Motor neuron (in vitro differentiated cells): ENCODE measurements at regions of chr2 and their contacts with region 1.

Region 1: DNA sequence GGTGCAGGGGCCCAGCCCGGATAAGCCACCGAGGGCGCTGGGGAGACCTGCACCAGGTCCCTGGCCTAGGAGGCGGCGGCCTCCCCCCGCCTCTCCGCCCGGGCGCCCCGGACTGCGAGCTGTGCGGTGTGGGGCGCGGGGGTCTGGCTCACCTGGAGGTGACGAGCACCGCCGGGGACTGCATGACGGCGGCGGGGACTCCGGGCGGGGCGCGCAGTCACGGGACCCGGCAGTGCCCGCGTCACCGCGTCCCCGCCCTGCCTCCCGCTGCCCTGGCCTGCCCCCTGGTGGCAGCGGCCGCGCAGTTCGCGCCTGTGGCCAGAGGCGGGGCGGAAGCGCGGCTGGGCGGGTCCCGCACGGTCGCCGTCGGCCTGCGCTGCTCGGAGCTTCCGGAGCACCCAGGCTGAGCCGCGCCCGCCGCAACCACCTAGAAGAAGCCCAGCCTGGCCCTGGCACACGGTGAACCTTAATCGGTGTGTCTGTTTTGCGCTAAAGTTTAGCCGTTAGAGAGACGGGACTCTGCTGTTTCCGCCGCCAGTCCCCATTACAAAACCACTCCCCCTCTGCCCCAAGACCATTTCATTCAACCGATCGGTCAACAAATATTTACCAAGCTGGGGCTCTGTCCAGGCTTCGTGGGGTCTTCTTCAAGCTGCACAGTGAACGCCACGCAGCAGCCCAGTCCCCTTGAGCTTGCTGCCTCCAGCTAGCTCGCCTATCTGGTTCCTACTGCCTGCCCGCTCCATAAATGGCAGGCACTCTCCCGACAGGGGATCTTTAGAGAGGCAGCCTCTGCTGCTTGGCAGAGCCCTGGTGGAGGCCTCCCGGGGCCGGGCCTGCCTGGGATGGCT is at the start of gene HS1BP3:
- ATAC-seq: peak; percentile 78 to 95 (median 92)
- H3K4me3 ChIP-seq: peak within 1 kb of the TSS; percentile 62 to 86 (median 65)
- H3K27ac ChIP-seq: peak within 1 kb of the TSS; percentile 64 to 78
- H3K4me1 ChIP-seq: peaks cover 16 to 22% of the 10 kb centered on the region in 2 donors
- total RNA-seq, gene HS1BP3: 6.8 to 29.2 (median 11.2) TPM

Region 2: DNA sequence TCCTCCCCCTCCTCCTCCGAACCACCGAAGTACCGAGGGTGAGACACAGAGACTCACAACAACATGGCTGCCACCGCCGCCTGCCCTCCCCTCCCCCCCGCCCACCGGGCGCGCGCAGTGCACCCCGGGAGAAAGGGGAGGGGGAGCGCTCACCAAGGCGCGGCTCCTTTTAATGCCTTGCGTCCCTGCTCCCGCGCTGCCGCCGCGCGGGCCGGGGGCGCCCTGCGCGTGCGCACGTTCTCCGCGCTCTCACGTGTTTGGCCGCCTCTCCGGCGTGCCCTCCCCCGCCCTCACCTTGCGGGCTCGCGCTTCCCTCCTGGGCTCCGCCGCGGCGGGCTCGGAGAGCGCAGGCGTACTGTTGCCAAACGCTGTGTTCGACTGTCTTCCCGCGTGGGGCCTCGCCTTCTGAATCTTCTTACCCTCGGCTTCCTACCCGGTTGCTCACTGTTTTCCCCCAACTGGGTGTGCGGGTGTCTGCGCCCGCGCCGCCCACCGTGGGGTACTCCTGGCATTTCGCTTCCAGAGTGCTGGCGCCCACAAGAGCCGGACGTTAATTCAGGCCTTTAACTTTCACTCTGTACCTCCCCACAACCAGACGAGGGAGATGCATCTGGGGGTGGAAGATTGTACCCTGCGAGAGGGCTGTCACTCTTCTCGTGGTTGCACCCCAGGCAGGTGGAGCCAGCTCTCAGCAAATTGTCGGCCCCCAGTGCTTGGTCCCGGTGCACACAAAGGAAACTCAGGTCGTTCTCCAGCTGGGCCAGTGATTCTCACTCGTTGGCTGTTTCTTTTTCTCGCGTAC is 300.2 kb before region 1 on chr2 and contains the start of gene PUM2:
- in situ Hi-C with region 1: no loop called
- ATAC-seq: peak; percentile 77 to 89 (median 84)
- H3K4me3 ChIP-seq: peak within 1 kb of the TSS; percentile 78 to 97 (median 88)
- H3K27ac ChIP-seq: peak within 1 kb of the TSS; percentile 98 to 99
- H3K4me1 ChIP-seq: peaks cover 39 to 43% of the 10 kb centered on the region in 2 donors
- total RNA-seq, gene PUM2: 26.0 to 79.4 (median 52.7) TPM

Region 3: DNA sequence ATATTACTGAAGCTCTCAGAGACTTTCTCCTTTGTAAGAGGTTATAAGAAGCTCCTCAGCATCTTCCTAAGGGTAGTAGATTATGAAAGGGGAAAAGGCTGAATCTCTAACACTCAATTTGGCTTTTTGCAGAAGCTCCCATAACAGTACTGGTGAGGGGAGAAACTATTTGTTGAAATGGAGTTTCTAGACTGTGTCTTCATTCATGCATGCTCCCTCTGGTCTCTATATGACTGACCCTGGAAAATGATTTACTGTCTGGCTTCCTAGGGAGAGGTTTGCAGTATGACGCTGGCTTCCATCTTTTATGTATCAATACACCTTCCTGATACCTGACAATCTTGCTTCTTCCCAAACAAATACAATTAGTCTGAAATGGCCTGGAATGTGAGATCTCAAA is 107.9 kb after region 1 on chr2:
- in situ Hi-C with region 1: no loop called
- ATAC-seq: no peak
- H3K4me3 ChIP-seq: no peak overlapping the region
- H3K27ac ChIP-seq: no peak overlapping the region
- H3K4me1 ChIP-seq: no peaks in the 10 kb centered on the region

Region 4: GRCh38 chr2:20925265-20925889 is 274.3 kb after region 1 on chr2:
- in situ Hi-C with region 1: loop called in 1 of 9 experiments (anchors 25 kb)
- ATAC-seq: peak in 1 of 8 experiments; percentile 24
- H3K4me3 ChIP-seq: no peak overlapping the region
- H3K27ac ChIP-seq: no peak overlapping the region
- H3K4me1 ChIP-seq: no peaks in the 10 kb centered on the region

Region 5: DNA sequence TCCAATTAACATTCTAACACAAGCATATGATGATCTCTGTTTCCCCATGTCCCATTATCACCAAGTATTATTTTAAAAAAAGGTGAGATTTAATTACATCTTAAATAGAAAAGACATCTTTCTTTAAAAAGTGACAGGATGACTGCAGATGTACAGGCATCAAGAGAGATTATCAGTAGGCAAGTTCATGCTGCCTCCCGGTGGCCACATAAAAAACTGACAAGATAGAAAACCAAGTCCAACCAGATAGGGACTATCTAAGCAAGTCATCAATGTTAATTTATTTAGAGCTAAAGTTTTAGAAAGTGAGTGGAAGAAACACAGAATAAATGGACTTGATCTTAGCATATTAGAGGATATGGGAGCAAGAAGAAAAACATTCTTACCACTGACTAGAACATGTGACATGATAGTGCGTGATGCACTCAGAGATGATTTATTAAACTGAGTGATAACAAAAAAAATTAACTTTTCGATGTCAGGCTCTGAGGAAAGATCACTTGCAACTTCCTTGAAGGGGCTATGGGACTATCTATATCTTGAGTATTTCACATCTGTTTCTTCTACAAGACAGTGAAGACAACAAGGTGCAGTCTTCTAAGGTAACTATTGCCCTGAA is 467.3 kb after region 1 on chr2:
- in situ Hi-C with region 1: loop called in 1 of 9 experiments (anchors 25 kb)
- ATAC-seq: peak in 4 of 8 experiments; percentile 48 to 89 (median 76)
- H3K4me3 ChIP-seq: no peak overlapping the region
- H3K27ac ChIP-seq: no peak overlapping the region
- H3K4me1 ChIP-seq: no peaks in the 10 kb centered on the region